ENCODE measurements at regions of chr7 and their contacts with region 1.

Region 1: GRCh38 chr7:50206453-50207250 is 97.9 kb upstream of the IKZF1 start:
- DNase-seq: peak; percentile 92
- H3K4me3 Mint-ChIP-seq: peak overlapping the region; percentile 51
- H3K27ac Mint-ChIP-seq: peak overlapping the region; percentile 92
- H3K4me1 Mint-ChIP-seq: peaks cover 86% of the 10 kb centered on the region
- H3K27me3 Mint-ChIP-seq: no peaks in the 10 kb centered on the region

Region 2: DNA sequence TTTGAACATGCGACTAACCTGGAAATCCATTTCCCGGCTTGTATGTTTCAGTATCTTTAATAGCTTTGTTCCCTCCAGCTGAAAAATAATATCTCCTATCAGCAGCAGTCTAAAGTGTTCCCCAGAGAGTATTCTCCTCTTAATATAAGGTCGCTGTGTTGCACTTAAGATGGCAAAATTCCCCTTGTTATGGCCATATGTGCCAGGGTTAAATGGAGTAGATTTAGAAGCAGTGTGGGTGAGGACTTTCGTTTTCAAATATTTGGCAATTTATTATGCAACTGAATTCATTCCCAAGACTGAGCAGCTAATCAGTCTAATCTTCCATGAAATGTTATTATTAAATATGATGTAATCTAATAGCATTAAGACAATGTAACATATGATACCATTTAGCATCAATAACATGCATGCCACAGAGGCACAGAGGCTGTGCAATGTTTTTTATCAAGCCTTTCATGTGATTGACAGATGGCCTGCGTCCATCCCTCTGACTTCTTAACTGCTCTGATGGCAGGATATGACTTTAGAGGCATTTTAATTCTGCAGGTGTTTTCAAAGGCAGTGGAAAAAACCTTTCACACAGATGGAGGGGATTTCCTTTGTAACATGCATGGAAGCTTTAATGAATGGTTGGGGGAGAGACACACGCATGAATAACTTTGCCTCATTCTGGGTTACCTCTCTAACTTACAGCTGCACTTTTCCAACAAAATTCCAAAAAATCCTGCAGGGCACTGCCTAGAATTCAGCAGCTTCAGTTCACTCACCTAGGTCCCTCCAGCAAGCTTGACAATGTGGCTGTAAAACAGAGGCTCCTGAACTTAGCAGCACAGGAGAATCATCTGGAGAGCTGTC is 58.5 kb before region 1 on chr7:
- CTCF ChIA-PET with region 1: interaction called, 55 read pairs
- intact Hi-C with region 1: loop called (anchors 1 kb)
- DNase-seq: peak; percentile 73
- H3K4me3 Mint-ChIP-seq: peak overlapping the region; percentile 34
- H3K27ac Mint-ChIP-seq: peak overlapping the region; percentile 91
- H3K4me1 Mint-ChIP-seq: peaks cover 91% of the 10 kb centered on the region
- H3K27me3 Mint-ChIP-seq: no peaks in the 10 kb centered on the region

Region 3: DNA sequence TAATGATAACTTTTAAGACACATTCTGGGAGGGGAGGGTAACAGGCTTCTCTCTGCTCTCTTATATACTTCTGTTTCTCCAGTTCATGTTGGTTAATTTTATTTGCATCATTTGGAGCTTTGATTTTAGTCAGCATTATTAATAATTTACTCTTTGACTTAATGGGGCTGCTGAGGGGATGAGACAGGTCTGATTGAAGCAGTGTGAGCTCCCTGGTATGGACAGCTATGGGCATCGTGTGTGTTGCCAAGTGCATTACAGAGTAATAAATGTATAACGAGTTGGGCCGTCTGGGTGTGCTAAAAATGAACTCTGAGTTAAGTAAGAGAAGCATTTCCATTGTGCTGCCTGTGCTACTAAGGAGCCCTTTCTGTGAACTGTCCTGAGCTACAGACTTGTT is 66.2 kb after region 1 on chr7:
- CTCF ChIA-PET with region 1: interaction called, 51 read pairs
- intact Hi-C with region 1: no loop called
- DNase-seq: no peak
- H3K4me3 Mint-ChIP-seq: no peak overlapping the region
- H3K27ac Mint-ChIP-seq: no peak overlapping the region
- H3K4me1 Mint-ChIP-seq: peaks cover 83% of the 10 kb centered on the region
- H3K27me3 Mint-ChIP-seq: no peaks in the 10 kb centered on the region

Region 4: GRCh38 chr7:50349963-50350944 is 143.6 kb after region 1 on chr7:
- CTCF ChIA-PET with region 1: interaction called, 96 read pairs
- intact Hi-C with region 1: loop called (anchors 1 kb)
- DNase-seq: peak; percentile 95
- H3K4me3 Mint-ChIP-seq: peak overlapping the region; percentile 33
- H3K27ac Mint-ChIP-seq: peak overlapping the region; percentile 95
- H3K4me1 Mint-ChIP-seq: peaks cover 97% of the 10 kb centered on the region
- H3K27me3 Mint-ChIP-seq: no peaks in the 10 kb centered on the region

Region 5: GRCh38 chr7:50418086-50418515 is 211.4 kb after region 1 on chr7:
- CTCF ChIA-PET with region 1: interaction called, 106 read pairs
- intact Hi-C with region 1: loop called (anchors 1 kb)
- DNase-seq: peak; percentile 92
- H3K4me3 Mint-ChIP-seq: no peak overlapping the region
- H3K27ac Mint-ChIP-seq: no peak overlapping the region
- H3K4me1 Mint-ChIP-seq: peaks cover 24% of the 10 kb centered on the region
- H3K27me3 Mint-ChIP-seq: no peaks in the 10 kb centered on the region

Region 6: GRCh38 chr7:51123322-51124029 is 916.8 kb after region 1 on chr7:
- CTCF ChIA-PET with region 1: no interaction called
- intact Hi-C with region 1: loop called (anchors 2 kb)
- DNase-seq: peak; percentile 94
- H3K4me3 Mint-ChIP-seq: no peak overlapping the region
- H3K27ac Mint-ChIP-seq: peak overlapping the region; percentile 95
- H3K4me1 Mint-ChIP-seq: peaks cover 36% of the 10 kb centered on the region
- H3K27me3 Mint-ChIP-seq: no peaks in the 10 kb centered on the region